ENCODE measurements at regions of chr7 and their contacts with region 1.

Region 1: DNA sequence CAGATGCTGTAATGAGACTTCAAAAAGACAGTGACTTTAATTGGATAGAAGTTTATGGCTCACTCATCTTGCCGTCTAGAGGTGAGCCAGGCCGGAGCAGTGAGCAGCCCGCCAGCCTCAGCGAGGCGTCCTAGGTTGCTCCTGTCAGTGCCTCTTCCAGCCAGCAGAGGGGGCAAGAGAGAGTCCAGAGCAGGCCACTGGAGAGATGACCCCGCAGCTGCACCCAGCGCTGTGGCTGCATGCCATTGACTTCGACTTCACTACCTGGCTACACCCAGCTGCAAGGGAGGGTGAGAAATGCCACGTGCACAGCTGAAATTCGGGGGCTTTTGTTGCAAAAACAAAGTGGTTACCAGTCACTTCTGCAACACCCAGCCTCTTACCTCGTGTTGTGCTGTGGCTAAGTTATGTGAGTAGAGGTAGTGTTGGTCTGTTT is 26.5 kb downstream of the NUB1 start:
- DNase-seq: peak; percentile 94
- H3K4me3 ChIP-seq: no peak overlapping the region
- H3K27ac ChIP-seq: peak overlapping the region in 1 of 3 donors; percentile 21
- H3K4me1 ChIP-seq: peaks cover 3 to 5% of the 10 kb centered on the region in 2 donors
- H3K27me3 ChIP-seq: no peaks in the 10 kb centered on the region
- CTCF ChIP-seq: peak; percentile 84 to 99 (median 96)
- POLR2A ChIP-seq: no peak

Region 2: GRCh38 chr7:151408839-151409666 is 40.9 kb after region 1 on chr7:
- intact Hi-C with region 1: loop called (anchors 5 kb)
- DNase-seq: peak; percentile 85 to 87
- H3K4me3 ChIP-seq: peak overlapping the region; percentile 68 to 84 (median 69)
- H3K27ac ChIP-seq: peak overlapping the region; percentile 89 to 97 (median 96)
- H3K4me1 ChIP-seq: peaks cover 18 to 41% of the 10 kb centered on the region in 2 donors
- H3K27me3 ChIP-seq: no peaks in the 10 kb centered on the region
- CTCF ChIP-seq: no peak
- POLR2A ChIP-seq: peak in 1 of 2 donors; percentile 81

Region 3: DNA sequence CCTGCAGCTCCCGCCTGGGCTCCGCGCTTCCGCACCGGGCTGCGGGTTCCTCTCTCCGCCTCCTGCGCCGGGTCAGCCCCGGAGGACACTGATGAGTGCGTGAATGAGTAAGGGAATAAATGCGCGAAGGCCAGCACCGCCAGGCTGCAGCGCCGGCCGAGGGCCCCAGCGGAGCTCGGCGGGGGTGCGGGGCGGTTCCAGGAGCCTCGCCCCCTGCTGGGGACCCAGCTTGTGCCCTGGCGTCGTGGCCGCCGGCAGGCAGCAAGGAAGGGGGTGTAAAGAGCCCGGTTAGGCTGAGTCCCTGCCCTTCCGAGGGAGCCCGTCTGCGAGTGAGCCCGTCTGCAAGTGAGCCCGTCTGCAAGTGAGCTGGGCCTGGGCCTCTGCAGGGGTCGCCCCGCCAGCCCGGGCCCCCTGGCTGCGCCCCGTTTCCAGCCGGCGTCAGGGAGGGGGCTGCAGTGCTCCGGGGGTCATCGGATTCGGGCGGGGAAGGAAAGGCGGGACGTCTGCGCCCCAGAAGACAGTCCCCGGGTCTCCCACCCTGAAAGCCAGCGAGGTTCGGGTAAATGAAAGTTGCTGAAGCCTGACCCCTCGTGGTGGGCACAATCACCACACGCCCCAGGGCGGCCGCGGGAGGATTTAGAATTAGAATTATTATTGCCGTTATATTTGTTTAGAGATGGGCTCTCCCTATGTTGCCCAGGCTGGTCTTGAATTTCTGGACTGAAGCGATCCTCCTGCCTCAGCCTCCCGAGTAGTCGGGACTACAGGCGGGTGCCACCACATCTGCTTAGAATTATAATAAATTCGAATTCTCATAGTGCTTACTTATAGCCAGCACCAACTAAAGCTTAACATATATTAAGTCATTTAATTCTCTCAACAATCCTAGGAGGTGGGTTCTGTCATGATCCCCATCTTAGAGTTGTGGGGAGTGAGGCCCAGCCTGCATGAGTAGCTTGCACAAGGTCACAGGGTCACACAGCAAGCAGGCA is 80.4 kb after region 1 on chr7:
- intact Hi-C with region 1: loop called (anchors 2 kb)
- DNase-seq: peak; percentile 69 to 76
- H3K4me3 ChIP-seq: peak overlapping the region in 1 of 3 donors; percentile 29
- H3K27ac ChIP-seq: peak overlapping the region in 2 of 3 donors; percentile 14 to 61
- H3K4me1 ChIP-seq: peaks cover 3 to 6% of the 10 kb centered on the region in 2 donors
- H3K27me3 ChIP-seq: no peaks in the 10 kb centered on the region
- CTCF ChIP-seq: peak; percentile 61 to 88 (median 81)
- POLR2A ChIP-seq: no peak